Ovary (tissue), 10 donors: ENCODE measurements at regions of chr2 and their contacts with region 1.

Region 1: GRCh38 chr2:160109936-160110673 is 47.7 kb upstream of the PLA2R1 start:
- DNase-seq: peak; percentile 64 to 76 (median 69)
- H3K4me3 ChIP-seq: no peak overlapping the region
- H3K27ac ChIP-seq: no peak overlapping the region
- H3K4me1 ChIP-seq: no peaks in the 10 kb centered on the region
- H3K27me3 ChIP-seq: no peaks in the 10 kb centered on the region
- CTCF ChIP-seq: peak; percentile 74 to 91 (median 77)
- EP300 ChIP-seq: no peak
- POLR2A ChIP-seq: no peak

Region 2: GRCh38 chr2:159272156-159272555 is 837.9 kb before region 1 on chr2:
- intact Hi-C with region 1: no loop called
- DNase-seq: no peak
- H3K4me3 ChIP-seq: no peak overlapping the region
- H3K27ac ChIP-seq: no peak overlapping the region
- H3K4me1 ChIP-seq: no peaks in the 10 kb centered on the region
- H3K27me3 ChIP-seq: no peaks in the 10 kb centered on the region
- CTCF ChIP-seq: no peak
- EP300 ChIP-seq: no peak
- POLR2A ChIP-seq: no peak

Region 3: GRCh38 chr2:160269803-160270570 is 159.9 kb after region 1 on chr2:
- intact Hi-C with region 1: loop called in 1 of 4 experiments (anchors 10 kb)
- DNase-seq: peak; percentile 94 to 97 (median 95)
- H3K4me3 ChIP-seq: peak overlapping the region; percentile 46
- H3K27ac ChIP-seq: peak overlapping the region; percentile 47 to 94
- H3K4me1 ChIP-seq: peaks cover 11% of the 10 kb centered on the region
- H3K27me3 ChIP-seq: no peaks in the 10 kb centered on the region
- CTCF ChIP-seq: peak; percentile 50 to 88 (median 84)
- EP300 ChIP-seq: peak; percentile 30
- POLR2A ChIP-seq: peak; percentile 32